Aorta (tissue), 5 donors: ENCODE measurements at regions of chr5 and their contacts with region 1.

Region 1: DNA sequence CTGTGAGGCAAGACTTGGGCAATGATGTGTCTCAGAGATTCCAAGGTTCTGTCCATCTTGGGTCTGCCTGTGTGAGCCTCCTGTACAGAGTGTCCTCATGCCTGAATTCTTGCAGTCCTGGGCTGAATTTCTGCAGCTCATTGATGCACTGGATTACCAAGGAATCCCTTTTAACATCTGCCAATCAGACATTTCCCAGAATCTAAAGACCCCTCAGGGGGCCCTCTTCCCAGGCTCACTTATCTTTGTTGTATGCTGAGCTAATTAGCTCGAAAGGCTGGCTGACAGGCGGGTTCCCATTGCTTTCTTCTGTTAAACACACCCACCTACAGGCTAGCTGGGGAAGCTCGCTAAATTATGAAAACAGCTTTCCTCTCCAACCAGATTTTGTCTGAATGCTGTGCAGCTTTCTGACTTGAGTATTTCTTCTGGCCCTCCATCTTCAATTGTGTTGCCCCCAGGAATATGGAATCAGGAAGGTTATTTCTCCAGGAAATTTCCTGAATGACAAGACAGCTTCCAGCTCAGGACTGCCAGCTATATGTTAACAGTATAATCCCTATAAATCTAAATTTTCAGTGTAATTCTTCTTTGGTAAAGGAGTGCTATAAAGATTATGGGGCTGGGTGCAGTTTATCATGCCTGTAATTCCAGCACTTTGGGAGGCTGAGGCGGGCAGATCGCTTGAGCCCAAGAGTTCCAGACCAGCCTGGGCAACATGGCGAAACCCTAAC is at the start of gene LIX1:
- DNase-seq: no peak
- ATAC-seq: no peak
- H3K4me3 ChIP-seq: no peak within 1 kb of the TSS
- H3K27ac ChIP-seq: no peak within 1 kb of the TSS
- H3K4me1 ChIP-seq: no peaks in the 10 kb centered on the region
- H3K27me3 ChIP-seq: no peaks in the 10 kb centered on the region
- total RNA-seq, gene LIX1: not detected

Region 2: DNA sequence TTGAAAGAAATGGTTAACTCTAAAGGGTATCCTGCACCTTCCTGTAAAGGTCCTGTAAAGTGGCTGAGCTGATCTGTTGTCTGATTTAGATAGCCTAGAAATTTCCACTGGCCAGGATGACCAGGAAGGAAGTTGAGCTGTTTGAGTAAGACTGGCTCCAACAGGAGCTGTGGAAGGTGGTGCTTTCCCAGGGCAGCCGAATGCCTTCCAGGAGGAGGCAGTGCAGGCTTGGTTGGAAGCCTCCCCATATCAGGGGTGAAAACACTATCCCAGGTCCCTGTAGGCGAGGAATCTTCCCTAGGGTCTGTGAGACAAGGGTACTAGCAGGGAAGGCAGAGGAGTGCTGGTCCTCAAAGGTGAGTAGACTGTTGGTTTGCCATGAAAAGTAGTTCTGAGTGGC is 98.6 kb before region 1 on chr5:
- intact Hi-C with region 1: loop called in 1 of 2 experiments (anchors 10 kb)
- DNase-seq: no peak
- ATAC-seq: peak; percentile 40
- H3K4me3 ChIP-seq: no peak overlapping the region
- H3K27ac ChIP-seq: no peak overlapping the region
- H3K4me1 ChIP-seq: no peaks in the 10 kb centered on the region
- H3K27me3 ChIP-seq: no peaks in the 10 kb centered on the region